ENCODE measurements at regions of chr11 and their contacts with region 1.

Region 1: DNA sequence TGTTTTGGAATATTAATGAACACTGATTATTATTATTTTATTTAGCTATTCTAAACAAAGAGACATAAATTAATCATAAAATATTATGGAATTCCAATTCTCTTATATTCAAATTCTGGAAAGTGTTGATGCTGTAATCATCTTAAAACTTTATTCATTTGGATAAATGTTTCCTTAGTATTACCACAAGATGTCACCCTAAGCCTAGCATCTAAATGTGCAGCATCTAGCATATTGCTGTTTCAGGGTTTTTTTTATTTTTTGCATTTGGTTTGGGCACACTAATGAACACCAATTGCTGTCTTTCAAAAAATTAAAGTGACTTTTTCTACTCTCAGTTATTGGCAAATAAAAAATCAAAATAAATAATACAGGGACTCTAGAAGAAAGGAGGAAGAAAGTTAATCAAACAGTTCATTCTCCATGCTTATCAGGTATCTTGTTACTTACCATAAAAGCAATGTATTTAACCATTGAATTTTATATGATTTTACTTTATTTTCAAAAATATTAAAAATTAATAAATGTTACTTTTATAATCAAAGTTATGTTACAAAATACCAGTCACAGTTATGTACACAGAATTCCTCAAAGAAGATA is 31.8 kb downstream of the DLG2 start:
- DNase-seq: peak; percentile 50
- H3K4me3 ChIP-seq: no peak overlapping the region
- H3K27ac ChIP-seq: no peak overlapping the region
- H3K4me1 ChIP-seq: no peaks in the 10 kb centered on the region
- H3K27me3 ChIP-seq: no peaks in the 10 kb centered on the region
- CTCF ChIP-seq: peak; percentile 19 to 30
- POLR2A ChIP-seq: no peak

Region 2: GRCh38 chr11:84558085-84558905 is 1037.1 kb before region 1 on chr11:
- CTCF ChIA-PET with region 1: interaction called, 38 read pairs
- POLR2A ChIA-PET with region 1: no interaction called
- dilution Hi-C with region 1: no loop called
- intact Hi-C with region 1: no loop called
- DNase-seq: peak; percentile 35
- H3K4me3 ChIP-seq: no peak overlapping the region
- H3K27ac ChIP-seq: no peak overlapping the region
- H3K4me1 ChIP-seq: no peaks in the 10 kb centered on the region
- H3K27me3 ChIP-seq: no peaks in the 10 kb centered on the region
- CTCF ChIP-seq: peak; percentile 48 to 63
- POLR2A ChIP-seq: no peak

Region 3: GRCh38 chr11:85627998-85628770 is 32.8 kb after region 1 on chr11 and contains the start of gene TMEM126B:
- CTCF ChIA-PET with region 1: no interaction called
- POLR2A ChIA-PET with region 1: no interaction called
- dilution Hi-C with region 1: no loop called
- intact Hi-C with region 1: loop called (anchors 2 kb)
- DNase-seq: peak; percentile 98
- H3K4me3 ChIP-seq: peak within 1 kb of the TSS; percentile 73 to 99 (median 91)
- H3K27ac ChIP-seq: peak within 1 kb of the TSS; percentile 68
- H3K4me1 ChIP-seq: peaks cover 16% of the 10 kb centered on the region
- H3K27me3 ChIP-seq: peaks cover 2 to 6% of the 10 kb centered on the region in 2 experiments
- CTCF ChIP-seq: no peak
- POLR2A ChIP-seq: peak; percentile 96
- total RNA-seq, gene TMEM126B: 49.4 and 51.2 TPM in 2 replicates

Region 4: DNA sequence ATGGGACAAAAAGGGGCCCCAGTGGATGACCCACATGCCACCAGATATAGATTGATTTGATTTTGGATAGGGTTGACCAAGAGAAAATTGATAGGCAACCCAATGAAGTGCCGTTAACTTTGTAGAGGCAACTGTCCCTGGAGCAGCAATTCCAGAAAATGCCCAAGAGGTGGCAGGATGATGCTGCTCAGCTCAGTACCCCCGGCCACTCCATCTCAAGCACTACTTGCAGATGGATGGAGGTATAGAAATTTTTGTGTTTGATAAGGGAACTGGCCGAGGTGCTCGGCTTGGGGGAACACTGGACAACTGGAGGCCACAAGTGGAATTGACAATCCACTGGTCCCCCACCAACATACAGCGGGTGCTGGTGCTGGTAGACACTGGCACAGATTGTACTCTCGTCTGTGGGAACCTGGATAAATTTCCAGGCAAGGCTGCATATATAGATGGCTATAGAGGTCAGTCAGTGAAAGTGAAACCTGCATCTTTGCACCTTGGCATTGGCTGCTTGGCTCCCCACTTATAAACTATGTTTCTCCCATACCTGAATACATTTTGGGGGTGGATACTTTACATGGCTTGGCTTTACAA is 346.1 kb after region 1 on chr11:
- CTCF ChIA-PET with region 1: no interaction called
- POLR2A ChIA-PET with region 1: no interaction called
- dilution Hi-C with region 1: no loop called
- intact Hi-C with region 1: loop called (anchors 5 kb)
- DNase-seq: peak; percentile 71
- H3K4me3 ChIP-seq: no peak overlapping the region
- H3K27ac ChIP-seq: no peak overlapping the region
- H3K4me1 ChIP-seq: peaks cover 12% of the 10 kb centered on the region
- H3K27me3 ChIP-seq: no peaks in the 10 kb centered on the region
- CTCF ChIP-seq: peak; percentile 76
- POLR2A ChIP-seq: no peak

Region 5: DNA sequence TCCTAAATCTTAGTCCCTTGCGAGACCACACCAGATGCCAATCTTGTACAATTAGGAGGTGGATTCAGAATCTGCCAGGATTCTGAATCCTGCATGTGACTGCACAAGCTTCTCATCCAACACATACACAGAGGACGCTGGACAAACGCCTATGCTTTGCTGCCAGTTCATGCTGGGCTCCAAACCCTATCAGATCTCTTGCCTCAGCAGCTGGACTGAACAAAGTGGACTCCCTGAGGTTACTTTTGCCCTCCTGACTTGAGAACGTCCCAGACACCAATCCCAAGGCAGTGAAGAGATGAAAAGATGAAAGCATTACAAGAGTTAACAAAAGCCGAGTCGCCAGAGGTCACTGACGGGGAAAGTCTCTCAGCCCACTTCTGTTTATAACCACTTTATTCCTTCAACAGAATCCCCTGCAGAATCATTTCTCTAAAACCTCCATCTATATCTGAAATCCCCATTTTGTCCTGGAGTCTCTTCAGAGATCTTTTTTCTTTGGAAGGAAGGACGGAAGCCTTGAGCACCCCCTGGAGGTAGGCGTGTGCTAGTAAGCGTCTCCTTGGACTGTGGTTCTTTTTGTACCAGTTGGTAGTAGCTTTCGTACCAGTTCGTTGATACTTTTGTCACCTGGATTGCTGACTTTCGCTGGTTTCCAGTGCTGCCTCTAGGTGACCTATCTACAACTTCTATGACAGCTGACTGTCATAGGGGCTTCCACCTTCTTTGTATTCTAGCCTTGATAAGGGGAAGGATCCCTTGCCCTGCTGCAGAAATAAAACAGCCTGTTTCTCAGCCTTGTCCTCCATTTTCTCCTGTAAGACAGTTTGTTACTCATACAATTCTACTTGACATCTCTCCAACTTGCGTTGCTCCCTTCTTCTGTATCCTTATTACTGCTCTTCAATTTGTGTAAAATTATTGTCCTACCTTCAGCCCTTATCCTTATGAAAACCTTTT is 623.0 kb after region 1 on chr11:
- CTCF ChIA-PET with region 1: no interaction called
- POLR2A ChIA-PET with region 1: no interaction called
- dilution Hi-C with region 1: no loop called
- intact Hi-C with region 1: loop called (anchors 10 kb)
- DNase-seq: peak; percentile 82
- H3K4me3 ChIP-seq: peak overlapping the region in 1 of 3 experiments; percentile 3
- H3K27ac ChIP-seq: no peak overlapping the region
- H3K4me1 ChIP-seq: no peaks in the 10 kb centered on the region
- H3K27me3 ChIP-seq: peaks cover 1 to 12% of the 10 kb centered on the region in 2 experiments
- CTCF ChIP-seq: peak; percentile 86 to 91
- POLR2A ChIP-seq: no peak

Region 6: DNA sequence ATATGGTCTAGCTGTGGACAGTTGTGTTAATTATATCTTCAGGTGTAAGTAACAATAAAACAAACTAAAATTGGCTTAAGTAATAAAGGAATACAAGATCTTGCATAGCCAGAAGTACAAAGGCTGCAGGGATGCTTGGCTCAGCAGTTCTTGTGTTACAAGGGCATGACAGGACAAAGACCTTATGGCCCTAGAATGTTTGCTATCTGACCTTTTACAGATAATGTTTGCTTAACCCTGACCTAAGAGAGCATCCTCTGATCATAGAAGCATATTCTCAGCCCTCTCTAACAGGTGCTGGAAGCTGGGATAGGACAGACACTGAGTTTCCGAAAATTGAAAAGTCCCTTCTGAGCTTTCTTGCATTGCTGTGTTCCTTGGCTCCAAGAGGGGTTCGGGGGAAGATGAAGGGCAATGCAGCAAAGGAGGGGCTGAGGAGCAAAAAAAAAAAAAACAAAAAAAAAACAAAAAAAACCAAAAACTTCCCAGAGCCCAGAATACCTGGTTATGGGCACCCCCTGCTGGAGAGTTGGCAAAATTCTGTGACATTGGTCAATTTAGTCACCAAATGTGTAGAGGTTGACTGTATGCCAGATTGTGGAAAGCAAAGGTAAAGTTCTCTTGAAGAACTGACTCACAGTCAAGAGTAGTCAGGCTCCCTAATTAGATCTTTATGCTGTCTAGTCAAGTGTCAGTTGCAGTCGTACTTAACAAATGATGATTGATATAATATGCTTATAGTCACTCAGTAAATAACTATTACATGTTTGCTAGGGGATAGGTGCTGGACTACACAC is 696.3 kb after region 1 on chr11:
- CTCF ChIA-PET with region 1: interaction called, 4 read pairs
- POLR2A ChIA-PET with region 1: no interaction called
- dilution Hi-C with region 1: no loop called
- intact Hi-C with region 1: loop called (anchors 2 kb)
- DNase-seq: peak; percentile 49
- H3K4me3 ChIP-seq: no peak overlapping the region
- H3K27ac ChIP-seq: no peak overlapping the region
- H3K4me1 ChIP-seq: no peaks in the 10 kb centered on the region
- H3K27me3 ChIP-seq: peaks cover 0 to 3% of the 10 kb centered on the region in 2 experiments
- CTCF ChIP-seq: peak; percentile 59 to 68
- POLR2A ChIP-seq: no peak